Heart left ventricle (tissue), 16 donors: ENCODE measurements at regions of chr13 and their contacts with region 1.

Region 1: DNA sequence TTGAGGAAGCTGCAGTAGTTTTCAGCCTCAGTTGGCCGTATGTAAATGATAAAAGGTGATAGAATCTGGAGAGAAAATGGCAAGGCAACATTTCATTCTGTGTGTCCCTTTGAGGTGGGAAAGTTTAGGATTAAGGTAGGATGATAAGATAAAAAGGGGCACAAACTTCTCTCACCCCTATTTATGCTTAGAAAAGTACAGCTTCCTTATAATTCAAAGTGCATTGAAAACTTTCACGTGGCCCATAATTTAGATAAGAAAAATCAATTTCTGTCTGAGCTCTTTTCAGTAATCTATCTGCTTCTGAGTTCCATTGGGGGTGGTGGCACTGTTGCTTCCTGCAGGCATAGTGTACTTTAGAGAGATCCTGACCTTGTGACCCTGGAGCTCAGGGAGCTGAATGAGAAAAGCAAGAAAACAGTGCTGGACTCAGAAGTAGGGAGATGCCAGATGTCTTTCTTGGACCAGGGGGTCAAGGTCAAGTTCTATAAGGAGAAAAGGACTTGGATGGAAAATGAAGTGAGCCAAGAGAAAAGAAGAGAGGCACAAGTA is 187.3 kb downstream of the NDFIP2 start:
- DNase-seq: no peak
- ATAC-seq: no peak
- H3K4me3 ChIP-seq: no peak overlapping the region
- H3K27ac ChIP-seq: no peak overlapping the region
- H3K4me1 ChIP-seq: peaks cover 0 to 31% (median 4%) of the 10 kb centered on the region in 12 donors
- H3K27me3 ChIP-seq: no peaks in the 10 kb centered on the region
- CTCF ChIP-seq: no peak
- POLR2A ChIP-seq: no peak

Region 2: GRCh38 chr13:79647538-79647937 is 20.7 kb before region 1 on chr13:
- intact Hi-C with region 1: no loop called
- DNase-seq: no peak
- ATAC-seq: no peak
- H3K4me3 ChIP-seq: no peak overlapping the region
- H3K27ac ChIP-seq: no peak overlapping the region
- H3K4me1 ChIP-seq: peaks cover 0 to 18% (median 0%) of the 10 kb centered on the region in 12 donors
- H3K27me3 ChIP-seq: no peaks in the 10 kb centered on the region
- CTCF ChIP-seq: no peak
- POLR2A ChIP-seq: no peak

Region 3: DNA sequence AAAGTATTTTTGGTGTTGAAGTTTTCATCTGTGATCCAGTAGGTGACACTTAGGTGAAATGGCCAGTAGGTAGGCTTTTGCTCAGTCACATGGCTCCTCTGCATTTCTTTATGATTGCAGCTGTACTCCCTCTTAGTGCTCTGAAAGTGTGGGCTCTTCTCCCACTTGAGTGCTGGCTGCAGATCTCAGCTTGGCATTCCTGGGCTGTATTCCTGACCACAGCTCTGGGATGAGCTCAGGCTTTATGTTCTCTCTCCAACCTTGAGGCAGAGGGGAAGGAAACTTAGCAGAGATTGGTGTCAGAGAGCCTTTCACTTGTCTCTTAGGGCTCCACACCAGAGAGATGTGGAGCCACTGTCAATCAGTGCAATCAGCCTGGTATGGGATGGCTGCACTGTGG is 67.0 kb after region 1 on chr13:
- intact Hi-C with region 1: loop called in 1 of 10 experiments (anchors 5 kb)
- DNase-seq: peak in 1 of 5 donors; percentile 28
- ATAC-seq: peak in 1 of 4 donors; percentile 28
- H3K4me3 ChIP-seq: no peak overlapping the region
- H3K27ac ChIP-seq: no peak overlapping the region
- H3K4me1 ChIP-seq: peaks cover 0 to 5% (median 0%) of the 10 kb centered on the region in 12 donors
- H3K27me3 ChIP-seq: no peaks in the 10 kb centered on the region
- CTCF ChIP-seq: no peak
- POLR2A ChIP-seq: no peak

Region 4: DNA sequence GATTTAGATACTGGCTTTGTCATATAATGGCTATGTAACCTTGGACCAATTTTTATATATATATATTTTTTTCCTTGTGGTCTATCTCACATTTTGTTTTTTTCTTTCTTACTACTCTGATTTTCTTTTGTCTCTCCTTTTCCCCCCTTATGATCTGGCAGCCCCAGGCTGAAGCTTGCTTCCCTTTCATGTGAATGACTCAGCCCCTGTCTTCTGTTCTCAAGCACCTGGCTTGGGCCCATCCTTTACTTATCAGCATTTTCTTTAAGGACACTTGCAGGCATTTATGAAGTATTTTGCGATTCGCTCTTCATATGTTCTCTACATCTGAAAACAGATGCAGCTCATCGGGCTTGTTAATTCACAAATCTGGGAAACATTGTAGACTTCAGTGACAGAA is 509.1 kb after region 1 on chr13:
- intact Hi-C with region 1: no loop called
- DNase-seq: no peak
- ATAC-seq: no peak
- H3K4me3 ChIP-seq: no peak overlapping the region
- H3K27ac ChIP-seq: no peak overlapping the region
- H3K4me1 ChIP-seq: peaks cover 0 to 4% (median 0%) of the 10 kb centered on the region in 12 donors
- H3K27me3 ChIP-seq: no peaks in the 10 kb centered on the region
- CTCF ChIP-seq: no peak
- POLR2A ChIP-seq: no peak